ENCODE measurements at regions of chr6 and their contacts with region 1.

Region 1: DNA sequence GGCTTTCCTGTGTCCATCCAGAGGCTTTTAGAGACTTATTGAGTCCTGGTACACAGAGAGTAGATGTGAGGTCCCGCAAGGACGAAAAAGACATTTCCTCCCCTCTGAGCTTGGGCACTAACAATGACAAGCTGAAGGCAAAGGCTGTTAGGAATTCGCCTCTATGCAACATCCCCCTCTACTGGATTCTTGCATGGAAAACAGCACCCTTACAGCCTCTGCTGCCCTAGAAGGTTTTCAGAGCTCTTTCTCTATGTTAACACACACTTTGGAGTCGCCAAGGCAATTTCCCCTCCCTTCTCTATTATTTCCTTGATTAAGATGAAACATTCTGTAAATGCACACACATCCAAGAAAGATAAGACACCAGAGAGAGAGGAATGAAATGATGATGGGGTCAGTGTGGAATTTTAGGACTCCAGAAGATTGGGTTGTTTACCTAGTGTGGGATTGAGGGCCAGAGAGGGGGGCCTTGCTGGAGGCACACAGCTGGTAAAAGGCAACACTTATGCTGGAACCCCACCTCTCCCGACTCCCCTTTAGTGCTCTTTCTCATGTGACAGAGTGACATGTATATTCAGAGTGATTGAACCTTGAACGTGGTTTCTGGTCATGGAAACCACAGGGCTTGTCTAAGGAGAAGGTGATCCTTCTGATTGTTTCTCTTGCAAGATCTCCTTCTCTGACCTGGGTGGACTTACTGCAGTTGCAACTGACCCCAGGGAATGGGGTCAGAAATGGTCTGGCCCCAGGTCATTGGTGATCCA is 300.7 kb downstream of the CLIC5 start:
- DNase-seq: peak in 7 of 9 donors; percentile 51 to 74 (median 68)
- ATAC-seq: peak; percentile 84
- H3K4me3 ChIP-seq: no peak overlapping the region
- H3K4me3 Mint-ChIP-seq: peak overlapping the region in 5 of 10 donors; percentile 16 to 64 (median 47)
- H3K27ac ChIP-seq: no peak overlapping the region
- H3K27ac Mint-ChIP-seq: peak overlapping the region in 3 of 9 donors; percentile 32 to 75 (median 70)
- H3K4me1 ChIP-seq: no peaks in the 10 kb centered on the region
- H3K4me1 Mint-ChIP-seq: peaks cover 8 to 46% (median 12%) of the 10 kb centered on the region in 7 donors
- H3K27me3 ChIP-seq: no peaks in the 10 kb centered on the region
- H3K27me3 Mint-ChIP-seq: no peaks in the 10 kb centered on the region

Region 2: GRCh38 chr6:44475779-44476434 is 1239.0 kb before region 1 on chr6:
- CTCF ChIA-PET with region 1: interaction called, 18 read pairs
- POLR2A ChIA-PET with region 1: no interaction called
- intact Hi-C with region 1: loop called in 1 of 2 experiments (anchors 2 kb)
- DNase-seq: peak; percentile 38 to 78 (median 64)
- ATAC-seq: peak; percentile 82
- H3K4me3 ChIP-seq: no peak overlapping the region
- H3K4me3 Mint-ChIP-seq: no peak overlapping the region
- H3K27ac ChIP-seq: no peak overlapping the region
- H3K27ac Mint-ChIP-seq: no peak overlapping the region
- H3K4me1 ChIP-seq: peaks cover 0 to 9% of the 10 kb centered on the region in 2 donors
- H3K4me1 Mint-ChIP-seq: peaks cover 0 to 2% (median 0%) of the 10 kb centered on the region in 7 donors
- H3K27me3 ChIP-seq: no peaks in the 10 kb centered on the region
- H3K27me3 Mint-ChIP-seq: peaks cover 0 to 8% (median 0%) of the 10 kb centered on the region in 5 donors

Region 3: GRCh38 chr6:44655412-44656342 is 1059.2 kb before region 1 on chr6:
- CTCF ChIA-PET with region 1: interaction called, 57 read pairs
- POLR2A ChIA-PET with region 1: interaction called, 5 read pairs
- intact Hi-C with region 1: loop called (anchors 1 kb)
- DNase-seq: peak; percentile 33 to 79 (median 65)
- ATAC-seq: peak; percentile 84
- H3K4me3 ChIP-seq: no peak overlapping the region
- H3K4me3 Mint-ChIP-seq: peak overlapping the region in 8 of 10 donors; percentile 26 to 72 (median 64)
- H3K27ac ChIP-seq: no peak overlapping the region
- H3K27ac Mint-ChIP-seq: peak overlapping the region; percentile 37 to 96 (median 79)
- H3K4me1 ChIP-seq: peaks cover 0 to 9% of the 10 kb centered on the region in 2 donors
- H3K4me1 Mint-ChIP-seq: peaks cover 6 to 16% (median 10%) of the 10 kb centered on the region in 7 donors
- H3K27me3 ChIP-seq: no peaks in the 10 kb centered on the region
- H3K27me3 Mint-ChIP-seq: peaks cover 0 to 12% (median 2%) of the 10 kb centered on the region in 5 donors

Region 4: DNA sequence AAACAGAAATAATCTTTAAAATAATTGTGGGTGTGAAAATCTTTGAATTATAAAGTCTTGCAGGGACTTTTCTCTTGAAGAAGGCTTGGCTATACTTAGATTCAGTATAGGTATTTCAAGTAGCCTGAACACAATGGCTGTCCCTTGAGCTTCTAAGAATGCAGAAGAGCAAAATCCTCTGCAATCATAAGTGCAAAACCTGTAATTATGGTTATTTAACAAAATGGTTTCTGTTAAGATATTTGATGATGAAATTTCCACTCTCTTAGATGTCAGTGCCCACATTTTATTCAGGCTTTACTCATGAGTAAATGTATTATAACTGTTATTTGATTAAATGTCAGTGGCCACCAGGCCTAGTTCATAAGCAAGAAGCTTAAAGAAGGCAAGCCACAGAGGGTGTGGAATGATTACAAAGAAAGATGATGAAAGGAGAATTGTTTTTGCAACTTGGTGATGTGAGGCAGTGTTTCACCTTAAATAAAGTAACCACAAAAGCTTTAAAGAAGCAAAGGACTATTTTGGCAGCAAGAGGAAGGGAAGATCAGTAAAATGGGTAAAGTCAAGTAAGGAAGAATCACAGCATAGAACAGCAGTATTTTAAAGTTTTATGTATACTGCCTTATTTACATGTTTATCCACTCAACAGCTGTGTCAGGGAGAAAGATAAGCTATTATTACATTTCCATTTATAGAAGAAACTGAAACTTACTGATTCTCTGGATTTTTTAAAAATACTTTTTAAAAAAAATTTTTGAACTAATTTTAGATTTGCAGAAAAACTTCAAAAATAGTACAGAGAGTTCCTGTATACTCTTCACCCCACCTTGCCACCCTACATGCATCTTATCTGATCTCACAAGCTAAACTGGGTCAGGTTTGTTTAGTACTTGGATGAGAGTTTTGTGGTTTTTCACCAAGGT is 737.9 kb before region 1 on chr6:
- CTCF ChIA-PET with region 1: no interaction called
- POLR2A ChIA-PET with region 1: no interaction called
- intact Hi-C with region 1: loop called in 1 of 2 experiments (anchors 1 kb)
- DNase-seq: peak in 7 of 9 donors; percentile 57 to 84 (median 73)
- ATAC-seq: peak; percentile 93
- H3K4me3 ChIP-seq: no peak overlapping the region
- H3K4me3 Mint-ChIP-seq: peak overlapping the region; percentile 23 to 74 (median 58)
- H3K27ac ChIP-seq: peak overlapping the region; percentile 18
- H3K27ac Mint-ChIP-seq: peak overlapping the region; percentile 20 to 88 (median 80)
- H3K4me1 ChIP-seq: peaks cover 6 to 23% of the 10 kb centered on the region in 2 donors
- H3K4me1 Mint-ChIP-seq: peaks cover 8 to 76% (median 47%) of the 10 kb centered on the region in 7 donors
- H3K27me3 ChIP-seq: no peaks in the 10 kb centered on the region
- H3K27me3 Mint-ChIP-seq: no peaks in the 10 kb centered on the region

Region 5: DNA sequence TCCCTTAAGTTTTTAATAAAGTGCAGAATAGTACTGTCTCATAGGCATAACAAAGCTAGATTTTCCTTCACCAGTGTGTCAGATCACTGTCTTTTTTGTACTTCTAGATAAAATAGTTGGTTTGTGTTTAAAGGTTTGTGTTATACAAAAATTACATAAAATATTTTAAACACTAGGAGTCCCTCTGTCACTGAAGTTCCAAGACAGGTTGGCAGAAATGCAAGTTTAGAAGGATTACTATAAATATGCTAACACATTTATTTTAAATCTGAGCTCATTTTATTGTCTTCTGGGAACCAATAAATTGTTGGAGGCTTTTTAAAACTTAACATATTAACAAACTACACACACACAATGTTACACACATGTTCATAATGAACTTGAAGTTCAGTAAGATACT is 417.6 kb before region 1 on chr6:
- CTCF ChIA-PET with region 1: interaction called, 5 read pairs
- POLR2A ChIA-PET with region 1: no interaction called
- intact Hi-C with region 1: loop called (anchors 1 to 10 kb)
- DNase-seq: no peak
- ATAC-seq: no peak
- H3K4me3 ChIP-seq: no peak overlapping the region
- H3K4me3 Mint-ChIP-seq: no peak overlapping the region
- H3K27ac ChIP-seq: no peak overlapping the region
- H3K27ac Mint-ChIP-seq: peak overlapping the region in 6 of 9 donors; percentile 4 to 56 (median 19)
- H3K4me1 ChIP-seq: peaks cover 0 to 14% of the 10 kb centered on the region in 2 donors
- H3K4me1 Mint-ChIP-seq: peaks cover 21 to 74% (median 43%) of the 10 kb centered on the region in 7 donors
- H3K27me3 ChIP-seq: no peaks in the 10 kb centered on the region
- H3K27me3 Mint-ChIP-seq: no peaks in the 10 kb centered on the region

Region 6: GRCh38 chr6:45495429-45496084 is 219.4 kb before region 1 on chr6:
- CTCF ChIA-PET with region 1: interaction called, 4 read pairs
- POLR2A ChIA-PET with region 1: no interaction called
- intact Hi-C with region 1: loop called in 1 of 2 experiments (anchors 2 kb)
- DNase-seq: peak in 7 of 9 donors; percentile 40 to 61 (median 53)
- ATAC-seq: peak; percentile 76
- H3K4me3 ChIP-seq: no peak overlapping the region
- H3K4me3 Mint-ChIP-seq: peak overlapping the region; percentile 54 to 83 (median 62)
- H3K27ac ChIP-seq: no peak overlapping the region
- H3K27ac Mint-ChIP-seq: peak overlapping the region; percentile 5 to 91 (median 70)
- H3K4me1 ChIP-seq: peaks cover 34 to 37% of the 10 kb centered on the region in 2 donors
- H3K4me1 Mint-ChIP-seq: peaks cover 39 to 55% (median 50%) of the 10 kb centered on the region in 7 donors
- H3K27me3 ChIP-seq: no peaks in the 10 kb centered on the region
- H3K27me3 Mint-ChIP-seq: no peaks in the 10 kb centered on the region

Region 7: DNA sequence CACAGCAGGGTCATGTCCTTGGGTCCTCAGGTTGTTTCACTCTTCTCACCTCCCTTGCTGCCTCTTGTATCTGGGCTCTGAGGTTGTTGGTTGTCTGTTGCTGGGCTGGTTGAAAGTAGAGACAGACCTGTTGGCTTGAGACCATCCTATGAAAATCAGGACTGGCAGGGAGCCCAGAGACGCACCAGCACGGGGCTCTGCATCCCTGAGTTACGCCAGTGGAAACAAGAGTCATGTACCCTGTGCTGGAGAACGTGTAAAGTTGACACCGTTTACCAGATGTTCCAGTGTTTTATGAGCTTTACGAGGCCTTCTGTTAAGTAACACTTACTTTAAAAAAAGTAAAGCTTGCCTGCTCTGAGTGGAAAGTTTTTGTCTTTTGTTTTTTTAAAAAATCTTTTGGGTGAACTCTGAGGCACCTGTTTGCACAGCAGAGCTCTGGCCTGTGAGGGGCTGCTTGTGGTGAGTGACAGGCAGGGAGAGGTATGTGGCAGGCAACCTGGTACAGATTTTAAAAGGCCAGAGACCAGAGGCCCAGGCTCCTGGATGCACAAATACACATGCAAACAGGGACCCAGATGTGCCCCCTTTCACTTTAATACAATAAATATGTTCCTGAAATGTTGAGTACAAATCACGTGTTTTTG is 77.2 kb before region 1 on chr6:
- CTCF ChIA-PET with region 1: no interaction called
- POLR2A ChIA-PET with region 1: no interaction called
- intact Hi-C with region 1: no loop called
- DNase-seq: no peak
- ATAC-seq: no peak
- H3K4me3 ChIP-seq: no peak overlapping the region
- H3K4me3 Mint-ChIP-seq: no peak overlapping the region
- H3K27ac ChIP-seq: no peak overlapping the region
- H3K27ac Mint-ChIP-seq: no peak overlapping the region
- H3K4me1 ChIP-seq: no peaks in the 10 kb centered on the region
- H3K4me1 Mint-ChIP-seq: peaks cover 4 to 11% (median 6%) of the 10 kb centered on the region in 7 donors
- H3K27me3 ChIP-seq: no peaks in the 10 kb centered on the region
- H3K27me3 Mint-ChIP-seq: peaks cover 0 to 7% (median 0%) of the 10 kb centered on the region in 5 donors

Region 8: DNA sequence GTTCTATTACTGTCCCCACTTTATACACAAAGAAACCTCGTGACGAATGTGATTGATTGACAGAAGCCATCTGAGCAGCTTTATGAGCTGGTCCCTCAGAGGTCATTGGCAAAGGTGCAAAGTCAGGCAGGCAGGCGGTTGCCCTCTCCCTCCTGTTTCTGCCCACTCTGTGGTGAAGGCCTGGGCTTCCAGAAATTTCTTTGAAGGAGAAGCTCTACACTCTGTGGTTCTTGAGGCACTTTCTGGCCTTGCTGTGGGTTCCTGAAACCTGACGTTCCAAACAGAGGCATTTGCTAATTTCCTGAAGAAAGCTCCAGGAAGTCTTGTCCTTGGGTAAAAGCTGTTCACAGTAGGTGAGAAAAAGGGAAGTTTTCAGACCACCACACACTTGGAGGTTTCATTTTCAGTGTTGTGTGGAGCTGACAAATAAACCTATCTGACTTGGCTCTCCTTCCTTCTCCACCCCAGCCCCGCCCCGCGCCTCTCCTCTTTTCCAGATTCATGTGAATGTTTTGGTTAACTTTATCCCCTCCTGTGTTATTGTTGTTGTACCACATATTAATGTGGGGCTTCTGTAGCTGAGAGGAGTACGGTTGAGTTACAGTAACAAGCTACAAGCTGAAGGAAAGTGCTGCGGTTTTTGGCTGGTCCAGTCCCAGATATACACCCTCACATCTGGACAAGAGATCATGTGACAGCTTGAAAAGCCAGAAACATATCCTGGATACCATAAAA is 26.7 kb after region 1 on chr6:
- CTCF ChIA-PET with region 1: no interaction called
- POLR2A ChIA-PET with region 1: no interaction called
- intact Hi-C with region 1: no loop called
- DNase-seq: no peak
- ATAC-seq: peak; percentile 60
- H3K4me3 ChIP-seq: no peak overlapping the region
- H3K4me3 Mint-ChIP-seq: no peak overlapping the region
- H3K27ac ChIP-seq: no peak overlapping the region
- H3K27ac Mint-ChIP-seq: peak overlapping the region in 4 of 9 donors; percentile 33 to 59 (median 45)
- H3K4me1 ChIP-seq: no peaks in the 10 kb centered on the region
- H3K4me1 Mint-ChIP-seq: peaks cover 10 to 41% (median 20%) of the 10 kb centered on the region in 7 donors
- H3K27me3 ChIP-seq: no peaks in the 10 kb centered on the region
- H3K27me3 Mint-ChIP-seq: peaks cover 0 to 3% (median 0%) of the 10 kb centered on the region in 5 donors

Region 9: GRCh38 chr6:45880159-45880558 is 165.2 kb after region 1 on chr6:
- CTCF ChIA-PET with region 1: no interaction called
- POLR2A ChIA-PET with region 1: no interaction called
- intact Hi-C with region 1: no loop called
- DNase-seq: no peak
- ATAC-seq: no peak
- H3K4me3 ChIP-seq: no peak overlapping the region
- H3K4me3 Mint-ChIP-seq: no peak overlapping the region
- H3K27ac ChIP-seq: no peak overlapping the region
- H3K27ac Mint-ChIP-seq: no peak overlapping the region
- H3K4me1 ChIP-seq: no peaks in the 10 kb centered on the region
- H3K4me1 Mint-ChIP-seq: no peaks in the 10 kb centered on the region
- H3K27me3 ChIP-seq: no peaks in the 10 kb centered on the region
- H3K27me3 Mint-ChIP-seq: peaks cover 0 to 23% (median 7%) of the 10 kb centered on the region in 5 donors

Region 10: DNA sequence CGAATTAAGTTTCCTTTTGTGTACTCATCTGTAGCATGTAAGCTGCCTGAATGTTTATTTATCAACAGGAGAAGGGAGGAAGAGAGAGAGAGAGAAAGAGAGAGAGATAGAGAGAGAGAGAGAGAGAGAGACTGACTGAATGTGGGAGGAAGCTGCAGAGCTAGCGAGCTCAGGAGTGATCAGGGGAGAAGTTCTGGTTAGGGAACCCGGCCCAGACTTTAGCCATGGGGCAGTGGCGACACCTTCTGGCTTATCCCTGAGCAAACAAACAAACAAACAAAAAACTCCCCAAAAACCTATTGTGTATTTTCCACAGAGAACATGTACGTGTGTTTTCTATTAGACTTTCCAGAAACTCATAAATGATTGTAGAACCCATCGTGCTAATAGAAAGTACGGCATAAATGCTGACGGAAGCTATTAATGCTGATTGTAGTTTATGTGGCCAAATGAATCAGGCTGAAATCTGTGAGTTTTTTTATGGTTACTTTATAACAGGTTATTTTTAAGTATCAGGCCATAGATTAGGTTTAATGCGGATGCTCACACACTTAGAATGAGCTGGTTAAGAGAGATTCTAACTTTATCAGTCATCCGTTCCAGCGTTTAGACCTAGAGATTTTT is 207.9 kb after region 1 on chr6:
- CTCF ChIA-PET with region 1: no interaction called
- POLR2A ChIA-PET with region 1: no interaction called
- intact Hi-C with region 1: loop called in 1 of 2 experiments (anchors 5 kb)
- DNase-seq: peak in 8 of 9 donors; percentile 13 to 59 (median 36)
- ATAC-seq: peak; percentile 67
- H3K4me3 ChIP-seq: no peak overlapping the region
- H3K4me3 Mint-ChIP-seq: no peak overlapping the region
- H3K27ac ChIP-seq: no peak overlapping the region
- H3K27ac Mint-ChIP-seq: peak overlapping the region in 2 of 9 donors; percentile 28 to 75
- H3K4me1 ChIP-seq: no peaks in the 10 kb centered on the region
- H3K4me1 Mint-ChIP-seq: peaks cover 0 to 42% (median 3%) of the 10 kb centered on the region in 7 donors
- H3K27me3 ChIP-seq: no peaks in the 10 kb centered on the region
- H3K27me3 Mint-ChIP-seq: peaks cover 0 to 11% (median 0%) of the 10 kb centered on the region in 5 donors

Measured in naive thymus-derived CD4-positive, alpha-beta T cell (primary cell).